OCI-LY7 (cell line): ENCODE measurements at regions of chr13 and their contacts with region 1.

Region 1: DNA sequence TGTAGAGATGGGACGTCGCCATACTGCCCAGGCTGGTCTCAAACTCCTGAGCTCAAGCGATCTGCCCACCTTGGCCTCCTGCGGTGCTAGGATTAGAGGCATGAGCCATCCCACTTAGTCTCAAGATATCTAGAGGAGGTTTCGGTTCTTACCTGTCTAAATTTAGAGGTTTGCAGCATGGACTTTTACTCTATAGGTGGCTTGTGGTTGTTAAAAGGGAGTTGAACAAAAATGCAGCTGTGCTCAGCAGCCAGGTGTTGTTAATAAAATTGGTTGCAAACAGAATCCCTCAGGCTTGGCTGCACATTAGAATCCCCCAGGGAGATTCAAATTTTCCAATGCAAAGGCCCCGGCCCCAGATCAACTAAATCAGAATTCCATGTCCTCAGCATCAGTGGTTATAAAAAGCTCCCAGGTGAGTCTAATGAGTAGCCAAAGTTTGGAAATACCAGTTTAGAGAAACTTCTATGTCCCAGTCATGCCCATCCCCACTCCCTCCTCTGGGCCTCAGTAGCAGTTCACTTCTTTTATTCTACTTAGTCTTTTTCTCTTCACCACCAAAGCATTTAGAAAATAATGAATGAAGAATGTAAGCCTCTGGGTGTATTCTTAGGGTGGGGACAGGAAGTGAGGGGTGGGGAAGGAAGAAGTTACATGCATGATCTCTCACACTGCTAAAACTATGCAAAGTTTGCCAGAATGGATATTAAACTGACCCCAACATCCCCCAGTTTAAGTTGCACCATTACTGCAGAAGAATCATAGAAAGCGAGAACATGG is 471.0 kb downstream of the COG6 start:
- DNase-seq: peak; percentile 97
- H3K4me3 ChIP-seq: peak overlapping the region; percentile 47
- H3K27ac ChIP-seq: peak overlapping the region; percentile 96
- H3K4me1 ChIP-seq: peaks cover 76% of the 10 kb centered on the region
- CTCF ChIP-seq: no peak

Region 2: GRCh38 chr13:39918837-39919236 is 207.7 kb before region 1 on chr13:
- CTCF ChIA-PET with region 1: no interaction called
- POLR2A ChIA-PET with region 1: no interaction called
- intact Hi-C with region 1: no loop called
- DNase-seq: no peak
- H3K4me3 ChIP-seq: no peak overlapping the region
- H3K27ac ChIP-seq: no peak overlapping the region
- H3K4me1 ChIP-seq: no peaks in the 10 kb centered on the region
- CTCF ChIP-seq: no peak

Region 3: DNA sequence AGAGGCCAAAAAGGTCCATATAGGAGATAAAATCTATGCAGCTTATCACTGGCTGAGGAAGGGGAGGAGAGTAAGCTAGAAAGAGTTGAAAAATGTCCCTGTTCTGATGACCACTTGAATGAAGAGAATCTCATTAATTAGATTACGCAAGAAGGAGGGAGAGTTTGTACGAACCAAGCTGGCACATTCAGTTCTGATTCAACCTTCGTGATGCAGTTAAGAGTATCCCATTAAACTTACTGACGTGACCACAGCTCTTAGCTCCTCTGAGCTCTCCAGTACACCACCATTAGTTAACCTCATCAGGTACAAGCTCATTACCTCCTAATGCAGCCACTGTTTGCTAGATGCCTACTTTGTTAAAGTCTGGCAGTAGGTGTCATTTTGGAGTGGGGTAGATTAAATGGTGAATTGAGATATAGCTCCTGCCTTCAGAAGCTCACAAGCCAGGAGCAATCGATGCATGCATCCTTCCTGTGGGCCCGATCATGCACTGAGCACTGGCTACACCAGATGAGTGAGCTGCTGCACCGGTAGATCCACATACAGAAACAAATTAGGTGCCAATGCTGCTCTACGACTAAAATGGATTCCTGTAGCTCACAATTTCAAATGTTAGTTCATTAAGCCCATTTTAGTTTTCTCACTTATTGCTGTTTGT is 12.7 kb before region 1 on chr13:
- CTCF ChIA-PET with region 1: interaction called, 4 read pairs
- POLR2A ChIA-PET with region 1: interaction called, 10 read pairs
- intact Hi-C with region 1: no loop called
- DNase-seq: peak; percentile 44
- H3K4me3 ChIP-seq: no peak overlapping the region
- H3K27ac ChIP-seq: no peak overlapping the region
- H3K4me1 ChIP-seq: peaks cover 9% of the 10 kb centered on the region
- CTCF ChIP-seq: no peak

Region 4: DNA sequence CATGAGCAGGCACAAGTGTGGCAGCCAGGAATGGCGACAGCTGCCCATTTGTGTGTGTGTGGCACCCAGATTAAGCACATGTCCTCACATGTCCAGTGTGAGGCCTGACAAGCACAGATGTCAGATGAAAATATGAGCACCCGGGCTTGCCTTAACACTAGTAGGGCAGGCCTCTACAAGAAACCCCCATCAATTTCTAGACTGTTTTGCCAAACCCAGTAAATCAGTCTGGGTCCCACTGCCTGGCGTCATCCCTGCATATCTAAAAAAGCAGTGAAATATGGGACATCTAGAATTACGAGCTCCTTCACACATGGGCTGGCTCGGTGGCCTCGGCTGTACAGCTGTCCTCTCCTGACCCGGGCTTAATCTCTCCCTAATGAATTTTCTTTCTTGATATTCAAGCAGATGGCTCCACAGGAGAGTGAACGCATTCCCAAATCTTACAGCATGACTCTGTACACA is 107.3 kb after region 1 on chr13:
- CTCF ChIA-PET with region 1: no interaction called
- POLR2A ChIA-PET with region 1: no interaction called
- intact Hi-C with region 1: no loop called
- DNase-seq: no peak
- H3K4me3 ChIP-seq: no peak overlapping the region
- H3K27ac ChIP-seq: no peak overlapping the region
- H3K4me1 ChIP-seq: no peaks in the 10 kb centered on the region
- CTCF ChIP-seq: no peak

Region 5: GRCh38 chr13:40388617-40389016 is 262.1 kb after region 1 on chr13:
- CTCF ChIA-PET with region 1: no interaction called
- POLR2A ChIA-PET with region 1: no interaction called
- intact Hi-C with region 1: loop called (anchors 2 kb)
- DNase-seq: peak; percentile 96
- H3K4me3 ChIP-seq: peak overlapping the region; percentile 66
- H3K27ac ChIP-seq: peak overlapping the region; percentile 67
- H3K4me1 ChIP-seq: peaks cover 44% of the 10 kb centered on the region
- CTCF ChIP-seq: no peak

Region 6: DNA sequence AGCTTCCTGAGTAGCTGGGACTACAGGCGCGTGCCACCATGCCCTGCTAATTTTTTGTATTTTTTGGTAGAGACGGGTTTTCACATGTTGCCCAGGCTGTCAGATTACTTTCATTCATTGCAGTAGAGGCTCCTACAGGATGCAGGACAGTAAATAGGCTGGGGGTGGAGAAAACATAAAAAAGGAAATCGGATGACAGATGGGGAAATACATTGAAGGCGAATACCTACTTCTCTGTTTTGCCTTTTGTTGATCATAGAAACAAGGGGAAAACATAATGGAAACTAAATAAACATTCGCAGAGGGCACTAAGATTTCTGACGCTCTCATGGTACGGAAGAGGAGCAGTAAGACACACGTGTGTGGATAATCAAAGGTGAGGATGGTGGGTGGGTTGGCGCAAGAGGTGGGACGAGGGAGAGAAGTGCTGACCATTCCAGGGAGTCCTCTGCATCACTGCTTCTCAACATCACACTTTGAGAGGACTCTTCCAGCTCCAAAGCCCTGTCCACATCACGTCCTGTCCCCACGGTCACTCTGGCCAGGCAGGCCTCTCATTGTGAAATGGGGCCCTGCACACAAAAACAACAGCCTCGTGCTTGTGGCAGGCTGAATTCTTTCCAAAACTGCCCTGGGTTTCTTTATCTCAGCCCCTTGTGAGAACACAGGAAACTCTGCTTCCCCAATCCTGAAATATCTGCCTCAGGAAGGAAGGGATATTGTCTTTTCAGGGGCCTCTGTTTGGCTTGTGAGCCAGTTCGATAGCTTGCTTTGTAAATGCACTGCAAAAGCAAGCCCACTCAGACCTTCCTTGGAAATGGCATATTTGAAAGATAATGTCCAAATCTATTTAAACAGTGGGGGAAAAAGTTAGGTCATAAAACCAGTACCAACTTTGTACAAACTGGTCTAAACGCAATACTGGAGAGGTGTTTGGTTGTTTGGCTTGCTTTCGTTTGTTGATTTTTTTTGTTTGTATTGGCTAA is 351.4 kb after region 1 on chr13:
- CTCF ChIA-PET with region 1: no interaction called
- POLR2A ChIA-PET with region 1: interaction called, 3 read pairs
- intact Hi-C with region 1: loop called (anchors 1 kb)
- DNase-seq: peak; percentile 54
- H3K4me3 ChIP-seq: peak overlapping the region; percentile 67
- H3K27ac ChIP-seq: peak overlapping the region; percentile 96
- H3K4me1 ChIP-seq: peaks cover 83% of the 10 kb centered on the region
- CTCF ChIP-seq: no peak

Region 7: DNA sequence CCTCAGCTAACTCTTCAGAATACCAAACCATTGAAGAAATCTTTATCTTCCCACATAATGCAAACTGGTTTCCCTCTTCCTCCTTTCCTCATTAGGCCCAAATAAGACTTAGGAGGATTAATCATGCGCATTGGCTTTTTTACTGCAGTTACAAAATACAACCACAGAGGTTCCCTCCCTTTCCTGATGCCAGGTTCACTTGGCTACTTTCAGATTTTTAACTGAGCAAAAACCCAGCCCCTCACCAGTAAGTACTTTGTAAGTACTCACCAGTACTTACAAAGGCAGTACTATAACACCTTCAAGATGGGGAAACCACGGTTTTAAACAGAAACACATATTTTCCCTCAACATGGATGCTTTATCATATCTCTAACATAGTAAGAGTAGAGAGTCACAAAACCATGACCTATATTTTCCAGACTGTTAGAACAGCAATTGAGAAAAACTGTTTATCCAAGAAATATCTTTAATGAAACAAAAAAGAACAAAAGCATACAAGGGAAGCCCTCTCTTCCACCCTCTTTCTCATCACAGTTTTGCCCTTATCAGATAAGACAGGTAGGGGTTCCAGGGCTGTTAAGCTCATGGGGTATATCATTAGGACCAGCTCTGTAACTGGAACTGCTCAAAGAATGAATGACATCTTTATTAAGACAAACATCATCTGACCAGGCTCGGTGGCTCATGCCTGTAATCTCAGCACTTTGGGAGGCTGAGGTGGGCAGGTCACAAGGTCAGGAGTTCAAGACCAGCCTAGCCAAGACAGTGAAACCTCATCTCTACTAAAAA is 527.2 kb after region 1 on chr13:
- CTCF ChIA-PET with region 1: no interaction called
- POLR2A ChIA-PET with region 1: no interaction called
- intact Hi-C with region 1: loop called (anchors 5 kb)
- DNase-seq: peak; percentile 58
- H3K4me3 ChIP-seq: peak overlapping the region; percentile 64
- H3K27ac ChIP-seq: peak overlapping the region; percentile 96
- H3K4me1 ChIP-seq: peaks cover 95% of the 10 kb centered on the region
- CTCF ChIP-seq: no peak; the same call in 1 of the 2 replicates